ENCODE measurements at regions of chr9 and their contacts with region 1.

Region 1: GRCh38 chr9:75088260-75088905 is at the start of gene OSTF1:
- DNase-seq: peak; percentile 92 to 97 (median 96)
- H3K4me3 ChIP-seq: peak within 1 kb of the TSS; percentile 89 to 97
- H3K4me3 Mint-ChIP-seq: peak within 1 kb of the TSS; percentile 99 to 100 (median 100)
- H3K27ac ChIP-seq: peak within 1 kb of the TSS; percentile 92
- H3K27ac Mint-ChIP-seq: peak within 1 kb of the TSS; percentile 90 to 98 (median 97)
- H3K4me1 ChIP-seq: peaks cover 73% of the 10 kb centered on the region
- H3K4me1 Mint-ChIP-seq: peaks cover 54 to 87% (median 66%) of the 10 kb centered on the region in 4 donors
- H3K27me3 ChIP-seq: no peaks in the 10 kb centered on the region
- H3K27me3 Mint-ChIP-seq: no peaks in the 10 kb centered on the region
- total RNA-seq, gene OSTF1: 59.8 to 60.8 TPM

Region 2: DNA sequence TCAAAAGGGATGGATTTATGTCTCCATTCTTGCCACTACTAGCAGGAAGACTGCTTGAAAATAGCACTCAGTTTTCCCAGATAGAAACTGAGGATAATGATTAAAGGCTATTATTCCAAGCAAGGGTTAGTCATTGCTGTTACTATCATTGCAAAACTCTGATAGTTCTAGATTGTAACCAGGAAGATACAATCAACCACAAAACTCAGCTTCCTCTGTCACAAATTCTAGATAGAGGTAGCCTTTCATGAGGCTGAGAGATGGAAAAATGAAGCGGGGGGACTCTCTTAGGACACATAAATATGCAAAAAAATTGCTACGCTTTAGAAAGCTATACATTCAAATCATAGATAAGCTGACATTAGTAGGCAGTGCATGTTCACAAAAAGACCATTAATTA is 1933.6 kb before region 1 on chr9:
- CTCF ChIA-PET with region 1: no interaction called
- POLR2A ChIA-PET with region 1: no interaction called
- intact Hi-C with region 1: loop called (anchors 5 kb)
- DNase-seq: peak; percentile 66 to 77 (median 68)
- H3K4me3 ChIP-seq: peak overlapping the region; percentile 3 to 78
- H3K4me3 Mint-ChIP-seq: peak overlapping the region; percentile 92 to 99 (median 94)
- H3K27ac ChIP-seq: peak overlapping the region; percentile 75
- H3K27ac Mint-ChIP-seq: peak overlapping the region; percentile 95 to 99 (median 97)
- H3K4me1 ChIP-seq: peaks cover 65% of the 10 kb centered on the region
- H3K4me1 Mint-ChIP-seq: peaks cover 37 to 68% (median 52%) of the 10 kb centered on the region in 4 donors
- H3K27me3 ChIP-seq: no peaks in the 10 kb centered on the region
- H3K27me3 Mint-ChIP-seq: no peaks in the 10 kb centered on the region

Region 3: DNA sequence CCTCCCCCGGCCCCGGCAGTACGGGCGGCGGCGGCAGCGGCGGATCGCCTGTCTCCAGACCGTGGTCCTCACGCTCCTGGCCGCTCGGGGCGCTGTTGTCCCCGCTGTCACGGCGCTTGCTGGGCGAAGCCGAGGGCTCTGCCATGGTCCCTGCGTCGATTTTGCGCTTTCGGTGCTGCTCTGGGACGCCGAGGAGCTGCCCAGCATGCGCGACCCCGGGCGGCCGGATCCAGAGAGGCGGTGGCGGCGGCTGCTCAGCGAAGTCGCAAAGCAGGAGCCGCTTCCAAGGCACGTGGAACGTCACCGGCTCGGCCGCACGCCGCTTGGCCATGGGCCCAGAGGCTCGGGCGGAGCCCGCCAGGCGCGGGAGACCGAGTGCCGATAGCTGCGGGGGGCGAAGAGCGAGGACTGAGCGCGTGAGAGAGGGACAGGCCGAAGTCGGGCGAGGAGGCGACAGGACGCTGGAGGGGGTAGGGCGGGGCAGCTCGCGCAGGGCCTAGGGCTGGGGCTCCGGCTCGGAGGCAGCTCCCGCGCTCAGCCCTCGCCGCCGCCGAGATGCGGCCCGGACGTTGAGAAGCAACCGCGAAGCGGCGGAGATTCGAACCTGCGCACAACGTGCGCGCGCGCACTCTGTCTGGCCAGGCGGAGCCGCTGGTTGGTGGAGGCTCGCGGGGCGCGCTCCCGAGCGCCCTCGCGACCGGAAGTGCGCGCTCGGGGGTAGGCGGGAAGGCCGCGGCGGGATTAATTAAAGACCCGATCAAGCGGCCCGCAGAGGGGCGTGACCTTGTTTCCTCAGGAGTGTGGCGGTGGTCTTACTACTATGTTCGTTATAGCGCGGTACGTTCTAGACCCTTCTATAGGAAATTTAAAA is 135.9 kb before region 1 on chr9 and contains the start of gene C9orf40:
- CTCF ChIA-PET with region 1: interaction called, 10 read pairs
- POLR2A ChIA-PET with region 1: interaction called, 43 read pairs
- intact Hi-C with region 1: loop called (anchors 1 kb)
- DNase-seq: peak; percentile 88 to 90 (median 89)
- H3K4me3 ChIP-seq: peak within 1 kb of the TSS; percentile 66 to 96
- H3K4me3 Mint-ChIP-seq: peak within 1 kb of the TSS; percentile 96 to 100 (median 98)
- H3K27ac ChIP-seq: peak within 1 kb of the TSS; percentile 82
- H3K27ac Mint-ChIP-seq: peak within 1 kb of the TSS; percentile 93 to 98 (median 97)
- H3K4me1 ChIP-seq: peaks cover 23% of the 10 kb centered on the region
- H3K4me1 Mint-ChIP-seq: peaks cover 9 to 31% (median 23%) of the 10 kb centered on the region in 4 donors
- H3K27me3 ChIP-seq: no peaks in the 10 kb centered on the region
- H3K27me3 Mint-ChIP-seq: no peaks in the 10 kb centered on the region
- total RNA-seq, gene C9orf40: 7.1 to 7.4 TPM

Region 4: DNA sequence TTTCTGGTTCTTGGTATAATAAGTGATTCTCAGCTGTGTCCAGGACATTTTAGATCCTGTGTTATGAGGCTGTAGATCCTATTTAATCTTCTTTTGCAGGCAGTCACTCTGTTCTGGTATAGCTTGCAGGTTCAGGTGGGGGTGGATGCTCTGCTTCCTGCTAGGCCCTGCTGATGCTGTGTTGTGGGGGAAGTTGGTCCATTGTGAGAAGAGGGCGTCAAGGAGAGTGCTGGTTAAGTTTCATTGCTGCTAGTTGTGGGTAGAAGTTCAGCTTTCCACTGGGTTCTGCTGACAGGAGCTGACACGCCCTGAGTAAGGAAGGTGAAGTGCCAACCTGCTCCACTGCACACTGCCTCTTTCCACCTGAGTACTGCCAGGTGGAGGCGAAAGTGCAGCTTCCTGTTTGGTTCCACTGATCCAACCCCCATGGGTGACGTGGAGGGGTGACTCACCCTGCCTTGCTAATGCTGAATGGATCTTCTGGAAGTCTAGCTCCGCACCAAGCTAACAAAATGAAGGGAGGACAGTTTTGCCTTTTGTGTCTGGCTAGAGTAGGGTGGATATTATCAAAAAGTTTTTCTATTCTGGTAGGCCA is 16.8 kb before region 1 on chr9:
- CTCF ChIA-PET with region 1: interaction called, 10 read pairs
- POLR2A ChIA-PET with region 1: interaction called, 6 read pairs
- intact Hi-C with region 1: loop called (anchors 2 kb)
- DNase-seq: peak; percentile 35 to 88 (median 42)
- H3K4me3 ChIP-seq: no peak overlapping the region
- H3K4me3 Mint-ChIP-seq: peak overlapping the region in 1 of 8 donors; percentile 23
- H3K27ac ChIP-seq: no peak overlapping the region
- H3K27ac Mint-ChIP-seq: peak overlapping the region; percentile 29 to 87 (median 57)
- H3K4me1 ChIP-seq: peaks cover 13% of the 10 kb centered on the region
- H3K4me1 Mint-ChIP-seq: peaks cover 12 to 30% (median 15%) of the 10 kb centered on the region in 4 donors
- H3K27me3 ChIP-seq: no peaks in the 10 kb centered on the region
- H3K27me3 Mint-ChIP-seq: no peaks in the 10 kb centered on the region

Region 5: GRCh38 chr9:75130621-75131230 is 42.3 kb after region 1 on chr9:
- CTCF ChIA-PET with region 1: interaction called, 5 read pairs
- POLR2A ChIA-PET with region 1: interaction called, 10 read pairs
- intact Hi-C with region 1: no loop called
- DNase-seq: no peak
- H3K4me3 ChIP-seq: no peak overlapping the region
- H3K4me3 Mint-ChIP-seq: no peak overlapping the region
- H3K27ac ChIP-seq: no peak overlapping the region
- H3K27ac Mint-ChIP-seq: peak overlapping the region in 5 of 7 donors; percentile 22 to 49 (median 30)
- H3K4me1 ChIP-seq: peaks cover 25% of the 10 kb centered on the region
- H3K4me1 Mint-ChIP-seq: peaks cover 28 to 70% (median 47%) of the 10 kb centered on the region in 4 donors
- H3K27me3 ChIP-seq: no peaks in the 10 kb centered on the region
- H3K27me3 Mint-ChIP-seq: no peaks in the 10 kb centered on the region

Region 6: DNA sequence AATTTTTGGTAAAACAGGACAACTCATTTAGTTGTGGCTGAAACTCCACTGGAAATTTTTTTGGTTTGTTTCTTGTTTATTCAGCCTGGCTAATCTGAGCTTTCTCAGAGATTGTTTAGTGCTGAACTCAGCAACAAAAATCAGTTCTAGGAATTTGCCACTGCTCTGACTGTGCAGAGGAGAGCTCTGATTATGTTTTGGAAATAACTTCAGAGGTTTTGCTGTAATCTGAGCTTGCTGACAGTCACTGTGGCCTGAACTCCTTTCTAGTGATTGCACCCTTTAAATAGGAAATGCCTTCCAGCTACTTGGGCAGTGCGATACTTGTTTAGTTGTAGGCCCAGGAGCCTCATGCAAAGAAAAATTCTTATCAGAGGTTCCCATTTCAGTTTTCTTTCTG is 60.2 kb after region 1 on chr9:
- CTCF ChIA-PET with region 1: interaction called, 20 read pairs
- POLR2A ChIA-PET with region 1: interaction called, 251 read pairs
- intact Hi-C with region 1: loop called (anchors 1 kb)
- DNase-seq: no peak
- H3K4me3 ChIP-seq: peak overlapping the region in 1 of 2 donors; percentile 0
- H3K4me3 Mint-ChIP-seq: peak overlapping the region in 7 of 8 donors; percentile 30 to 88 (median 80)
- H3K27ac ChIP-seq: peak overlapping the region; percentile 37
- H3K27ac Mint-ChIP-seq: peak overlapping the region; percentile 74 to 92 (median 84)
- H3K4me1 ChIP-seq: peaks cover 86% of the 10 kb centered on the region
- H3K4me1 Mint-ChIP-seq: peaks cover 62 to 92% (median 74%) of the 10 kb centered on the region in 4 donors
- H3K27me3 ChIP-seq: no peaks in the 10 kb centered on the region
- H3K27me3 Mint-ChIP-seq: no peaks in the 10 kb centered on the region

Region 7: GRCh38 chr9:76023715-76024195 is 935.4 kb after region 1 on chr9:
- CTCF ChIA-PET with region 1: no interaction called
- POLR2A ChIA-PET with region 1: no interaction called
- intact Hi-C with region 1: loop called (anchors 2 kb)
- DNase-seq: peak; percentile 58 to 76 (median 69)
- H3K4me3 ChIP-seq: peak overlapping the region; percentile 9 to 36
- H3K4me3 Mint-ChIP-seq: peak overlapping the region; percentile 63 to 84 (median 78)
- H3K27ac ChIP-seq: peak overlapping the region; percentile 31
- H3K27ac Mint-ChIP-seq: peak overlapping the region; percentile 76 to 96 (median 87)
- H3K4me1 ChIP-seq: peaks cover 68% of the 10 kb centered on the region
- H3K4me1 Mint-ChIP-seq: peaks cover 58 to 93% (median 75%) of the 10 kb centered on the region in 4 donors
- H3K27me3 ChIP-seq: no peaks in the 10 kb centered on the region
- H3K27me3 Mint-ChIP-seq: no peaks in the 10 kb centered on the region